Activated CD4-positive, alpha-beta T cell treated with anti-CD3 and anti-CD28 coated beads, Interleukin-2, amount 10 ng/mL, durations not matched to agents 24 days and 14 days (primary cell): ENCODE measurements at regions of chr5 and their contacts with region 1.

Region 1: GRCh38 chr5:139745800-139746690 is 49.6 kb upstream of the PSD2 start:
- DNase-seq: peak; percentile 76
- H3K4me3 Mint-ChIP-seq: peak overlapping the region; percentile 82
- H3K27ac Mint-ChIP-seq: no peak overlapping the region
- H3K4me1 Mint-ChIP-seq: peaks cover 29% of the 10 kb centered on the region
- H3K27me3 Mint-ChIP-seq: peaks cover 39% of the 10 kb centered on the region

Region 2: GRCh38 chr5:139711067-139711905 is 34.8 kb before region 1 on chr5:
- intact Hi-C with region 1: loop called (anchors 2 kb)
- DNase-seq: peak; percentile 78
- H3K4me3 Mint-ChIP-seq: peak overlapping the region; percentile 73
- H3K27ac Mint-ChIP-seq: no peak overlapping the region
- H3K4me1 Mint-ChIP-seq: peaks cover 13% of the 10 kb centered on the region
- H3K27me3 Mint-ChIP-seq: peaks cover 42% of the 10 kb centered on the region

Region 3: DNA sequence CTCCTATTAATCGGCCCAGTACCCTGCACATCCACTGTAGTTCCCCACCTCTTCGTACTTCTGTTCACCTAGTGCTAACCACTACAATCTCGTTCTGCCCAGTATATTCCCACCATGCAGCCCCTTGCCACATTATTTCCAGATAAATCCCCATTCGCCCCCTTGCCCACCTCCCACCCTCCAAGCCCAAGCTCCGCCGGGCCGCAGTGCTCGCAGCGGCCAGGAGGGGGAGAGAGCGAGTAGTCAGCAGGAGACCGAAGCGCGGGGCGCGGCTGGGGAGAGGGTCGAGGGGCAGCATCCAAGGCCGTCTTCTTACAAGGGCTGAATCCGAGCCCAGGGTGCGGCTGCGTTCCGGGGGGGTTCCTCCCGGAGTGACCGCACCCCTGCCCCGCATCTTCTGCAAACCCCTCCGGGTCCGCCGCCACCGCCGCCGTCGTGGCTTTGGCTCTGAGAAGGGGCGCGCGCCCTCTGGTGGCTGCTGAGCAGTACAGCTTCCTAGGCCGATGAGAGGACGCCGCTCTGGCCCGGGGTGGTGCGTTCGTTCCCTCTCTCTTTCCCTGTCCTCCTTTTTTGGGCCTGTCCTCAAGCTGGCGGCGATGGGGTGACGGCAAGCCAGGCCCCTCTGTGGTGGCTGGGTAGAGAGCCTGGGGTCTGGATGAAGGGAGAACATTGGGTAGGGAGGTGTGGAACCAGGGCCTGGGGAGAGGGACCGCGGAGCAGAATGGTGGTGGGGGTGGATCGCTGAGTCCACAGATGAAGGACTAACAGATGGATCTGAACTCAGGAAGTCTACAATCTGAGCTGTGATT is 19.6 kb after region 1 on chr5:
- intact Hi-C with region 1: loop called (anchors 1 kb)
- DNase-seq: peak; percentile 92
- H3K4me3 Mint-ChIP-seq: peak overlapping the region; percentile 79
- H3K27ac Mint-ChIP-seq: peak overlapping the region; percentile 39
- H3K4me1 Mint-ChIP-seq: peaks cover 10% of the 10 kb centered on the region
- H3K27me3 Mint-ChIP-seq: peaks cover 38% of the 10 kb centered on the region